Activated naive CD4-positive, alpha-beta T cell treated with anti-CD3 and anti-CD28 coated beads, Interleukin-2, amount 10 ng/mL, durations not matched to agents 7 days and 5 days (primary cell): ENCODE measurements at regions of chr17 and their contacts with region 1.

Region 1: GRCh38 chr17:27332485-27333409 is 38.8 kb downstream of the WSB1 start:
- DNase-seq: peak; percentile 92
- H3K4me3 Mint-ChIP-seq: peak overlapping the region; percentile 67
- H3K27ac Mint-ChIP-seq: peak overlapping the region; percentile 81
- H3K4me1 Mint-ChIP-seq: peaks cover 25% of the 10 kb centered on the region
- H3K27me3 Mint-ChIP-seq: peaks cover 9% of the 10 kb centered on the region

Region 2: GRCh38 chr17:27245230-27245696 is 87.5 kb before region 1 on chr17:
- CTCF ChIA-PET with region 1: interaction called, 21 read pairs
- DNase-seq: peak; percentile 57
- H3K4me3 Mint-ChIP-seq: no peak overlapping the region
- H3K27ac Mint-ChIP-seq: no peak overlapping the region
- H3K4me1 Mint-ChIP-seq: peaks cover 7% of the 10 kb centered on the region
- H3K27me3 Mint-ChIP-seq: peaks cover 47% of the 10 kb centered on the region

Region 3: DNA sequence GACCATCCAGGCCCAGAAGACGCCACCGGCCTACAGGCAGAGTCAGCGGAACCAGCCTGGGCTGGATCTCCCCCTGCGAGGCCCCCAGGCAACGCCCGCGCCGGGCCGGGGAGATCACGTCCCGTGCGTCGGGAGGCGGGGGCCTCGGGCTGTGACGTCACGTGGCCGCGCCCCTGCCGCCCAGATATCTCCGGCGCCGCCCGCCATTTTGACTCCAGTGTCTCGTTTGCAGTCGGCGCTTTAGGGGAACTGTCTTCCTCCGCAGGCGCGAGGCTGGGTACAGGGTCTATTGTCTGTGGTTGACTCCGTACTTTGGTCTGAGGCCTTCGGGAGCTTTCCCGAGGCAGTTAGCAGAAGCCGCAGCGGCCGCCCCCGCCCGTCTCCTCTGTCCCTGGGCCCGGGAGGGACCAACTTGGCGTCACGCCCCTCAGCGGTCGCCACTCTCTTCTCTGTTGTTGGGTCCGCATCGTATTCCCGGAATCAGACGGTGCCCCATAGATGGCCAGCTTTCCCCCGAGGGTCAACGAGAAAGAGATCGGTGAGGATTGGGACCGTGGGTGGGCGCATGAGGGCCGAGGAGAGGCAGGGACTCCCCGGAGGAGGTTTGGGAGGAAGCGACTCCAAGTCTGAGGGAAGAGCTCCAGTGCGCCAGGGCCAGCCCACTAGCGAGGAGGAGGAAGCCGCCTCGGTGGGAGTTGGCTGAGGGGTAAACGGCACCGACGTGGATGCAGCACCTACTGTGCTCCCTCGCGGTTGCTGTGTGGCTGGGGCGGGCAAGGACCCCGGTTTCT is 38.7 kb before region 1 on chr17 and contains the start of gene WSB1:
- CTCF ChIA-PET with region 1: interaction called, 11 read pairs
- DNase-seq: peak; percentile 93
- H3K4me3 Mint-ChIP-seq: peak within 1 kb of the TSS; percentile 90
- H3K27ac Mint-ChIP-seq: peak within 1 kb of the TSS; percentile 96
- H3K4me1 Mint-ChIP-seq: peaks cover 38% of the 10 kb centered on the region
- H3K27me3 Mint-ChIP-seq: no peaks in the 10 kb centered on the region